Activated CD4-positive, alpha-beta T cell treated with anti-CD3 and anti-CD28 coated beads, Interleukin-2, amount 10 ng/mL, durations not matched to agents 7 days and 5 days (primary cell): ENCODE measurements at regions of chr10 and their contacts with region 1.

Region 1: GRCh38 chr10:21495752-21496342 is 29.6 kb downstream of the SKIDA1 start:
- DNase-seq: peak; percentile 83
- H3K4me3 Mint-ChIP-seq: peak overlapping the region; percentile 81
- H3K27ac Mint-ChIP-seq: peak overlapping the region; percentile 75
- H3K4me1 Mint-ChIP-seq: peaks cover 27% of the 10 kb centered on the region
- H3K27me3 Mint-ChIP-seq: peaks cover 70% of the 10 kb centered on the region

Region 2: GRCh38 chr10:21315645-21316281 is 180.1 kb before region 1 on chr10:
- CTCF ChIA-PET with region 1: no interaction called
- POLR2A ChIA-PET with region 1: no interaction called
- DNase-seq: no peak
- H3K4me3 Mint-ChIP-seq: no peak overlapping the region
- H3K27ac Mint-ChIP-seq: no peak overlapping the region
- H3K4me1 Mint-ChIP-seq: no peaks in the 10 kb centered on the region
- H3K27me3 Mint-ChIP-seq: no peaks in the 10 kb centered on the region

Region 3: GRCh38 chr10:21516242-21517131 is 20.6 kb after region 1 on chr10:
- CTCF ChIA-PET with region 1: interaction called, 16 read pairs
- POLR2A ChIA-PET with region 1: no interaction called
- DNase-seq: peak; percentile 43
- H3K4me3 Mint-ChIP-seq: peak overlapping the region; percentile 70
- H3K27ac Mint-ChIP-seq: no peak overlapping the region
- H3K4me1 Mint-ChIP-seq: peaks cover 42% of the 10 kb centered on the region
- H3K27me3 Mint-ChIP-seq: peaks cover 84% of the 10 kb centered on the region